Activated CD4-positive, alpha-beta memory T cell treated with anti-CD3 and anti-CD28 coated beads for 36 hours (primary cell): ENCODE measurements at regions of chr9 and their contacts with region 1.

Region 1: DNA sequence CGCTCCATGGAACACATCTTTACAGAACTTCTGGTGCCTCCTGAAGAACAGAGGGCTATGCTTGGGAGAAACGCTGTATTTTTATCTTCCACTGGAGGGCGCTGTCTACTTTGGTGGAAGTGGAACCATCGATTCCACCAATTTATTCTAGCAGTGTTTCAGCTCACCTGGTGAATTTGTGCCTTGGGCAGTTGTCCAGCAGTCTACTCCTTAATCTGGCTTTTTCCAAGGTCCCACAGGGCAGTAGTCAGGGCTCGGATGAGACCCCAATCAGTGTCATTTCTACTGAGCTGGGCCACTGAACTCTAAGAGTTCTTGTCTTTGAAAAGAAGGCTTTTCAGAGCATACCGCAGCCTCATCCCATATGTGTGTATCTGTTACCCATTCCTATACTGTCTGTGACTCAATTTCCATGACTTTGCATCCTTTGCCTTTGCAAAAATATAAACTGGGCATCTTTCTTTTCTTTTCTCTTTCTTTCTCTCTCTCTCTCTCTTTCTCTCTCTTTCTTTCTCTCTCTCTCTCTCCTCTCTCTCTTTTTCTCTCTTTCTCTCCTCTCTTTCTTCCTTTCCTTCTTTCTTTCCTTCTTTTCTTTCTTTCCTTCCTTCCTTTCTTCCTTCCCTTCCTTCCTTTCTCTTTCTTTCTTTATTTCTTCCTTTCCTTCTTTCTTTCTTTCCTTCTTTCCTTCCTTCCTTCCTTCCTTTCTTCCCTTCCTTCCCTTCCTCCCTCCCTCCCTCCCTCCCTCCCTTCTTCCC is 138.4 kb upstream of the ZNF618 start:
- DNase-seq: peak; percentile 37
- H3K4me3 Mint-ChIP-seq: no peak overlapping the region
- H3K27ac Mint-ChIP-seq: no peak overlapping the region
- H3K4me1 Mint-ChIP-seq: no peaks in the 10 kb centered on the region
- H3K27me3 Mint-ChIP-seq: peaks cover 7% of the 10 kb centered on the region

Region 2: GRCh38 chr9:113963017-113963620 is 225.4 kb after region 1 on chr9:
- CTCF ChIA-PET with region 1: interaction called, 5 read pairs
- POLR2A ChIA-PET with region 1: no interaction called
- intact Hi-C with region 1: loop called (anchors 2 kb)
- DNase-seq: peak; percentile 60
- H3K4me3 Mint-ChIP-seq: no peak overlapping the region
- H3K27ac Mint-ChIP-seq: no peak overlapping the region
- H3K4me1 Mint-ChIP-seq: no peaks in the 10 kb centered on the region
- H3K27me3 Mint-ChIP-seq: no peaks in the 10 kb centered on the region